A673 (cell line): ENCODE measurements at regions of chr2 and their contacts with region 1.

Region 1: GRCh38 chr2:64330281-64331113 is 123.5 kb upstream of the LGALSL start:
- DNase-seq: peak; percentile 88
- H3K4me3 ChIP-seq: peak overlapping the region; percentile 28
- H3K27ac ChIP-seq: no peak overlapping the region
- H3K4me1 ChIP-seq: no peaks in the 10 kb centered on the region
- H3K27me3 ChIP-seq: no peaks in the 10 kb centered on the region
- CTCF ChIP-seq: peak; percentile 91

Region 2: DNA sequence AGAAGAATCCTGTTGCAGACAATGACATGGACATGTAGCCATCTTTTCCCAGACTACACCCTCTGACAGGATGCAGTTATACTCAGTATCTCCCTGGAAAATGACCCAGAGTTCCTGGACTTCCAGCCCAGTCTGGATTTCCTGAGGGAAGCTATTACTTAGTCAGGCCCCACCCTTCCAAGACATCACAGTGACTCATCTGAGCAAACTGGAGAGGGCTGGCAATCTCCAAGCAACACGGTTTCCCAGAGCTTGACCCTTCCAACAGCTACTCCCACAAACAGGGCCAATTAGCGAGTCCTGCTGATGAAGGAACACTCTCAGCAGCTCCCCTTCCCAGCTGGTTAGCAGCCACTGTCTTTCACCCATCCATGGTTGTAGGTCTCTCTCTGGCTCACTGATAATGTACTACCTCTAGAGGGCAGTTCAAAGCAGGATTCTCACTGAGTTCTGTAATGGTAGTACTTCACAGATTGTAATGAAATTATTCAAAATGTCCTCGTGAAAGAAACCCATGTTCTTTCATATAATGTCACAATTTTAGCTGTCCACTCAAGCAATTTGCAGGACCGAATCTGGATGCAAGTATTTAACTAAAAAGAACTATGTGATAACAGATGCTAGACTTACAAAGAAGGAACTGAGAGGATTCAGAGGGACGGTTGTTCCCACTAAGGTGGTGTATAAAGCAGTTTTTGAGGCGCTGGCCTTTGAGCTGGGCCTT is 631.5 kb before region 1 on chr2:
- CTCF ChIA-PET with region 1: interaction called, 3 read pairs
- POLR2A ChIA-PET with region 1: no interaction called
- intact Hi-C with region 1: loop called (anchors 10 kb)
- DNase-seq: peak; percentile 73
- H3K4me3 ChIP-seq: no peak overlapping the region
- H3K27ac ChIP-seq: no peak overlapping the region
- H3K4me1 ChIP-seq: no peaks in the 10 kb centered on the region
- H3K27me3 ChIP-seq: no peaks in the 10 kb centered on the region
- CTCF ChIP-seq: peak; percentile 70

Region 3: GRCh38 chr2:64052468-64053241 is 277.8 kb before region 1 on chr2:
- CTCF ChIA-PET with region 1: interaction called, 33 read pairs
- POLR2A ChIA-PET with region 1: no interaction called
- intact Hi-C with region 1: loop called (anchors 1 kb)
- DNase-seq: peak; percentile 88
- H3K4me3 ChIP-seq: no peak overlapping the region
- H3K27ac ChIP-seq: no peak overlapping the region
- H3K4me1 ChIP-seq: peaks cover 4% of the 10 kb centered on the region
- H3K27me3 ChIP-seq: no peaks in the 10 kb centered on the region
- CTCF ChIP-seq: no peak

Region 4: DNA sequence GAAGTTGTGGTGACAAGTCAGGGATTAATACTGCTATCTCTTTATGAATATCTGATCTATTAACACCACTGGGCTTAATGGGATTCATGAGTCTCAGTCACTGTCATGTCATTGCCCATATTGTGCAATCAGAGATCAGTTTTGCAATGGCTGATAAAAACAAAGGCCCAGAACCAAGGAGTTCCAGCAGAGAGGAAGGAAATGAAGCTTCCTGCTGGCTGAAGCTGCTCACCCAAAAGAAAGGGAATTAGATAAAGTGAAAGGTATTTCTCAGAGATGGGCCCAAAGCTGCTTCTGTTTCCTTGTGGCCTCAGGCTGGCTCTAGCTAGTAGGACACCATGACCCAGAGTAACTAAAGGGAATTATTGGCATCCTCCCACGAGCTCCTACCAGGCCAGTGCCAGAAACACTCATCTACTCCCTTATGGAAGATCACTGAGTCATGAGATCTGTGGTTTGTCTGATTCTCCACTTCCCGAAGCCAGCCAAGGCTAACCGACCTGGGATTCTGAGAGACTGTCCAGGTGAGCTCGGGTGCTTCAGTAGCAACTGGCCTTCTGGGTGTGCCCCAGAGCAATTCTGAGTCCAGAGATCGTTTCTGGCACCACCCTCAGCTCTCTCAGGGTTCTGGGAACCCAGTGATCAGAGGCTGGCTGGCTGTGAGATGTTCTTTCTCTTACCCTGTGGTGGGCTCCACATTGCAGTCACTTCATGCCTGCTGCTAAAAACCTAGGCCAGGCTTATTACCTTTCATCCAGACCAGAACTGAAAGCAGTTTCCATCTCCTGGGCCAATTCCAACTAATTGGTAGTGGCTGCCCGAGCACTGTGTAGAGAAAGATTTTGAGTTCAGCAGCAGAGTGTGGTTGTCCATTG is 56.7 kb before region 1 on chr2:
- CTCF ChIA-PET with region 1: no interaction called
- POLR2A ChIA-PET with region 1: no interaction called
- intact Hi-C with region 1: no loop called
- DNase-seq: peak; percentile 97
- H3K4me3 ChIP-seq: peak overlapping the region; percentile 8
- H3K27ac ChIP-seq: peak overlapping the region; percentile 89
- H3K4me1 ChIP-seq: peaks cover 45% of the 10 kb centered on the region
- H3K27me3 ChIP-seq: no peaks in the 10 kb centered on the region
- CTCF ChIP-seq: no peak

Region 5: DNA sequence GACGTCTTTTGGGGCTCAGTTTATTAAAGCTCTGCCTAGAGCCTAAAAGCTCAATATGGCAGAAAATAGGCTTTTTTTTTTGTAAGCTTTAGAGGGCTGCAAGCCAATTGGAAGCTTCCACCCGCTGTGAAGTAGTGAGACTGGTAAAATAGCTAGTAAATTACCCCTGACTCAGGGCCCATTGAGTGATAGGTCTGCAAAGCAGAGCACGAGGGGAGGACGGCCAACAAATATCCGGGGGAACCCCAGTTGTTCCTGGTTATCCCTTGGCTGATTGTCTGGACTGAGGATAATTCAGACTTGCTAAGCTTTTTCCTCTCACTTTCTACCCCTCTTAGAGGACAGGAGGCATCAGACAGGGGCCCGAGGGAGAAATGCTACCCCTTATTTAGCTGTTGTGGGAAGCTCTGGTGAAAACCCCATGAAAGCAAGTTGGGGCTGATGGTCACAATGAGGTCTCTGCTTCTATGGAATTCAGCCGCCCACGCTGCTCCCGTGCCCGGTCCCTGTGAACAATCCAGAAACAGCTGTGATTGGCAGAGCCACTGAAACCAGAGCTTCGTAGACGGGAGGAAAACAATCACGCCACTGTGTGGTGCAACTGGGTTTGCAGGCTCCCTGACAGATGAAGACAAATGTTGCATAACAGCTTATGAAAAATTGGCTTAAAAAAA is 18.4 kb before region 1 on chr2:
- CTCF ChIA-PET with region 1: interaction called, 13 read pairs
- POLR2A ChIA-PET with region 1: no interaction called
- intact Hi-C with region 1: no loop called
- DNase-seq: peak; percentile 96
- H3K4me3 ChIP-seq: peak overlapping the region; percentile 9
- H3K27ac ChIP-seq: peak overlapping the region; percentile 81
- H3K4me1 ChIP-seq: peaks cover 30% of the 10 kb centered on the region
- H3K27me3 ChIP-seq: no peaks in the 10 kb centered on the region
- CTCF ChIP-seq: peak; percentile 72

Region 6: GRCh38 chr2:64488050-64488974 is 157.8 kb after region 1 on chr2:
- CTCF ChIA-PET with region 1: interaction called, 19 read pairs
- POLR2A ChIA-PET with region 1: no interaction called
- intact Hi-C with region 1: loop called (anchors 1 kb)
- DNase-seq: peak; percentile 73
- H3K4me3 ChIP-seq: no peak overlapping the region
- H3K27ac ChIP-seq: no peak overlapping the region
- H3K4me1 ChIP-seq: no peaks in the 10 kb centered on the region
- H3K27me3 ChIP-seq: no peaks in the 10 kb centered on the region
- CTCF ChIP-seq: peak; percentile 94

Region 7: DNA sequence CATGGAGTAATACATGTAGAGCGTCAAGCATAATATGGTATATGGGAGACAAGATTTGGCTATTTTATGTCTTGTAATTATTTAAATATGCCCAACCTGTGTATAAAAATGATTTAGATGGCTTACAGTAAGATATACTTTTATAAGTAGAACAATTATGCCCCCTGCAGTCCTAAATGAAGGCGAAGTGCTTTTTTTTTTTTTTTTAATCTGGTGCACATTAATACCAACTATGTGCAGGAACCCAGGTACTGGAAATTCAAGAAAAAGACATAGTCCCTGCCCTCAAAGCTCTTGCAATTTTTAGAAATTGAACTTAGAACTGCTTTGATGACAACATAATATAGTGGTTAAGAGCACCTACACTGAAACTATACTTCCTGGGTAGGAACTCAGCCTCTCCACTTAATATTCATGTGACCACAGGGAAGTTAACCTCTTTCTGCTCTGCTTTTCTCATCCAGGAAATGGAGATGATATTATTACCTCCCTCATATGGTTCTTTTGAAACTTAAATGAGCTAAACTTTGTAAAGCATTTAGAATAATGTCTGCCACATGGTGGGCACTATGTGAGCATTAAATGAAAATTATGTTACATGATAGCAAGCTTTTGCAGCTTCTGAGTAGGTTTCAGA is 231.8 kb after region 1 on chr2:
- CTCF ChIA-PET with region 1: interaction called, 11 read pairs
- POLR2A ChIA-PET with region 1: no interaction called
- intact Hi-C with region 1: loop called (anchors 2 kb)
- DNase-seq: peak; percentile 73
- H3K4me3 ChIP-seq: no peak overlapping the region
- H3K27ac ChIP-seq: no peak overlapping the region
- H3K4me1 ChIP-seq: peaks cover 13% of the 10 kb centered on the region
- H3K27me3 ChIP-seq: no peaks in the 10 kb centered on the region
- CTCF ChIP-seq: peak; percentile 57

Region 8: DNA sequence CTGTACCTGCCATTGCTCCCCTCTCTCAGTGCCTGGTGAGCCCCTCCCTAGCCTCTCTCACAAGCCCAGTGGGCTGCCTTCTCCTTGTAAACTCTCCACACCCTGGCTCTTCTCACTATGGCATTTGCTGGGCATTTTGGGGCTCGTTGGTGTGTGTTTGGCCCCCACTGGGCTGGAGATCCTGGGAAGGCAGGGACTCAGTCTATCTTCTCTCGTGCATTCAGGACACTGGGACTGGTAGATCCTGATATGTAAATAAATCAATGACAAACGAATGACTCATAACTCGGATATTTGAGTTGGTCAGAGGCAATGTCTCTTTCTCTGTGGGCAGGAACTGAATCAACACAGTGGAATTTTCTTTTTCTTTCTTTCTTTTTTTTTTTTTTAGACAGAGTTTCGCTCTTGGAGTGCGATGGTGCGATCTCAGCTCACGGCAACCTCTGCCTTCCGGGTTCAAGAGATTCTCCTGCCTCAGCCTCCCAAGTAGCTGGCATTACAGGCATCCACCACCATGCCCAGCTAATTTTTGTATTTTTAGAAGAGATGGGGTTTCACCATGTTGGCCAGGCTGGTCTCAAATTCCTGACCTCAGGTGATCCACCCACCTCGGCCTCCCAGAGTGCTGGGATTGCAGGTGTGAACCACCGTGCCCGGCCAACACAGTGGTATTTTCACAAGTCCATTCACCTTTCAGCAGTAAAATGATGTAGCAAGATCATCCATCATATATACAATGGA is 1246.5 kb after region 1 on chr2:
- CTCF ChIA-PET with region 1: no interaction called
- POLR2A ChIA-PET with region 1: no interaction called
- intact Hi-C with region 1: loop called (anchors 10 kb)
- DNase-seq: peak; percentile 86
- H3K4me3 ChIP-seq: no peak overlapping the region
- H3K27ac ChIP-seq: peak overlapping the region; percentile 39
- H3K4me1 ChIP-seq: peaks cover 16% of the 10 kb centered on the region
- H3K27me3 ChIP-seq: no peaks in the 10 kb centered on the region
- CTCF ChIP-seq: no peak